Posterior vena cava (tissue), 2 donors: ENCODE measurements at regions of chr20 and their contacts with region 1.

Region 1: DNA sequence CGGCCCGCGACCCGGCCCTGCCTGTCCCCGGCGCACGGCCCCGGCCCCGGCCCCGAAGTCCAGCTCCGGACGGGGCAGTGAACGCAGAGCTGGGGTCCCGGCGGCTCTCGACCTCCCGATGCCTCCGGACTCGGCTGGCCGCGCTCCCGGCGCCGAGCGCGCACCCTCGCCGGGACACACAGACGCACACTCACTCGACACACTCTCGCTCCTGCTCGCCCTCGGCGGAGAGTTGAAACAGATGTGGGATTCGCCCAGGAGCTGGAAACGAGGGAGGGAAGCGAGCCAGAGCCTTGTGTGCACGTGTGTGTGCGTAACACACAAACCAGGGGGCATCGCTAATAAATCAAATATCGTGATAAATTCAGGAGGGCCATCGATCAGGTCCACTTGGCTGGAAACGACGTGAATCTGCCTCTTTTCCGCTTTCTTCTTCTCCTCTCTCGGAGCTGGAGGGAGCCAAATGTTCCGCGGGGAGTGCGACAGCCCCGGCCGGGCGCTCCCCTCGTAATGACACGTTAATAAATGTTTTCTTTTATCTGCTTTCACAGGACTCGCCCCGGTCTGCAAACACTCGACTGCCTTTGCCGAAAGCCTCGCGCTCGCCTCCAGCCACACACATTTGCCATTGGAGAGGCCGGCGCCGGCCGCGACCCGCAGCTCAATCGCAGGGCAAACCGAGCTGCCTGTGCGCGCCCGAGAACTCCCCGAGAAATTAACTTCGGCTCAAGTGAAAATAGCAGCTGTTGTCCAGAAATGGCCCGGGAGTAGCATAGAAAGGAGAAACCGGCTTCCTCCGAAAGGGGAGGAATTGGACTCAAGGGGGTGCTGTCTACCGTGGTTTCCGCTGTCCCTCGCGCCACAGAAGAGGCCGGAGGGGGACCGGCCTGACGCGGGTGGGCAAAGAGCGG is 828 bp upstream of the SULF2 start:
- DNase-seq: peak; percentile 89

Region 2: GRCh38 chr20:47677635-47678453 is 108.3 kb before region 1 on chr20:
- intact Hi-C with region 1: loop called in 1 of 2 experiments (anchors 10 kb)
- DNase-seq: no peak

Region 3: DNA sequence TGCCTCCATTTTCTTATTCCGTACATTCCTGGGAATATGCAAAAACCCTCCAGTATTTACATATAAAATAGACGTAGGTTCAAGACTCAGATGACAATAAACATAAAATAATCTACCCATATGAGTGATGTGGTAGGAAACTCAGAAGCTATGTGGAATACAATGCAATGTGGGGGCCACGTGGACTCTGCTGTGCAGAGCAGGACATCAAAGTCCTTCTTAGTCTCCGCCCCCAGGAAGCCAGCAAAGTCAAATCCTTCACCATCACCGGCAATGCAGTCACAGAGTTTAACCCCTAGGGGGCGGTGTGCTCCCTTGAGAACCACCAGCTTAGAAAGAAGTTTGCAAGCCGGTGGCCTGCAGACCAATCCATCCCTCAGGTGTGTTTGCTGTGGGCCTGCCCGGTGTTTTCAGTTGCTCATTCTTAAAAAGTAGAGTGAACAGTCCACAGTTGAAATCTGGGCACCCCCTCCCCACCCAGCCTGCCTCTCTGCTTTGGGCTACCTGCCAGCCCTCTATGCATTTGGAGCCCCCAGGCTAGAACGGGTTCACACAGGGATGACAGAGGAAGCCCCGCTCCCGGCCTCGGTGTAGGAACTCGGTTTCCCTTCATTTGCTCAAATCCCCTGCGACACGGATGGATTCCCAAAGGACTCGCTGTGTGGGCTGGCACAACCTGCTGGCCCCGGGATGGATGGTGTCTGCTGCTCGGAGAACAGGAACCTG is 60.7 kb before region 1 on chr20:
- intact Hi-C with region 1: loop called in 1 of 2 experiments (anchors 10 kb)
- DNase-seq: peak; percentile 85

Region 4: DNA sequence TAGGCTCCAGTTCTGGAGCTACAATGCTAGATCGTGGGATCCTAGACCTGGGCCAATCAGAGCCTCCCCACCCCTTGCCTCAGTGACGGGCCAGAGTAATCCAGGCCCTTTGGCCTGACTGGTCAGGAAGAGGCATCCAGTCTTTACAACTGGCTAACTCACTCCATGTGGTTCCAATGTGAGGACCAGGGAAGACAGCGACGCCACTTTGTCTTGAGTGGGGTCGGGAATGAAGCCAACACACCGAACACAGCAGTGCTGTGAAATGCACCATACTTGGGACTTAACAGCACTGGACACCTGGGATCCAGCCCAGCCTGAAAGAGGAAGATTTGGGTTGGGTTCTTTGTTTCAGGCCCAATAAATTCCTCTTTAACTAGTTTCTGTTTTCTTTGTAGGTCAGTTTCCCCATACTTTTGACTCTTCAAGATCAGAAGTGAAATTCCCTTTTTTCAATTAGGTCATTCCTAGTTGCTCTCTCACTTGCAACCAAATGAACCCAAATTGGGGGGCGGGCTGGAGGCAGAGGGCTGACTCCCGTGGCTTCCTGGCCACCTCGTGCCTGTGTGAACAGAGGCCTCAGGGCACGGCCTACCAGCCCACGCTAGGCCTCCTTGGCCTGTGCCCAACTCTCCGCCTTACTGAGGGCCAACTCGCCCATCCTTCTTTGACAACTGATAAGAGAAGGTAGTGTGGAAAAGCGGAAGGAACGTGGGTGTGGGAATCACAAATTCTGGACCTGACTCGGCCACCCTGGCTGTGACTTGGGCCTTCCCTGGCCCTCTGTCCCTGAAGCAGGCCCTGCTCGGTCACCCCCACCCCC is 17.9 kb before region 1 on chr20:
- intact Hi-C with region 1: no loop called
- DNase-seq: peak; percentile 85

Region 5: GRCh38 chr20:48295445-48295963 is 509.4 kb after region 1 on chr20:
- intact Hi-C with region 1: loop called in 1 of 2 experiments (anchors 10 kb)
- DNase-seq: no peak

Region 6: DNA sequence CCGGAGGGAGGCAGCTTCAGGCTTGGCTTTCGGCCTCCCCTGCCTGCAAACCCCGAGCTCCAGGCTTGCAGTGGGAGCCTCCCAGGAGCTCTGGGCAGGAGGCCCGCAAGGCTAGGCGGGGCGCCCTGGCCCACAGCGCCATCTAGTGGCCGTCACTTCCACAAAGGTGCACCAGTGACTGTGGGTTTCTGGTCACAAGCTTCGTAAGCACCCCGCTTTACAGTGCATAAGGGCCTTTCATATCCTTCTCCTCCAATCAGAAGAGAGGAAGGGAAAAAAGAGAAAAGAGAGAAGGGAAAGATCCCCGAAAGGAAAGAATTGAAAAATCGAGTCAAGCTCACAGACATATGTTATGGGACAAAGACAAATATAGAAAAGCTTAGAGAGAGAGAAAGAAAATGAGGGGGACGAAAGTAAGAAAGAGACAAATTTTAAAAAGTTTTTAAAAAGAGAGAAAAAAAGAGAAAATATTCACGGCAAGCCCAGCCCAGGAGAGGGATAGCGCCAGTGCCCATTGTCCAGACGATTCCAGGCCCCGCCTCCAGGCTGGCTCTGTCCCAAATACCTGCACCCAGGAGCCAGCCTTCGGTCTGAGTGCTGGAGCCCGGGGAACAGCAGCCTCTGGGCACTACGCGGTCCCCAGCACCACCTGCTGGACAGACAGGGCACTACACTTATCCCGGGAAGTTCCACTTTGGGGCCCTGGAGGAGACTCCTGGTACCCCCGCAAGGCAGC is 834.6 kb after region 1 on chr20:
- intact Hi-C with region 1: loop called (anchors 2 to 5 kb)
- DNase-seq: peak; percentile 95